ENCODE measurements at regions of chr19 and their contacts with region 1.

Region 1: GRCh38 chr19:6372594-6373095 is at the start of gene ALKBH7:
- DNase-seq: peak; percentile 98
- ATAC-seq: peak; percentile 84
- H3K4me3 Mint-ChIP-seq: peak within 1 kb of the TSS; percentile 80
- H3K27ac Mint-ChIP-seq: peak within 1 kb of the TSS; percentile 92
- H3K4me1 Mint-ChIP-seq: peaks cover 11% of the 10 kb centered on the region
- H3K27me3 Mint-ChIP-seq: no peaks in the 10 kb centered on the region
- total RNA-seq, gene ALKBH7: 22.8 to 44.7 TPM

Region 2: GRCh38 chr19:5622463-5623396 is 749.9 kb before region 1 on chr19 and contains the starts of genes SAFB and SAFB2:
- CTCF ChIA-PET with region 1: no interaction called
- POLR2A ChIA-PET with region 1: no interaction called
- intact Hi-C with region 1: loop called in 1 of 2 experiments (anchors 10 kb)
- DNase-seq: peak; percentile 100
- ATAC-seq: peak; percentile 92
- H3K4me3 Mint-ChIP-seq: peak within 1 kb of the TSS; percentile 100
- H3K27ac Mint-ChIP-seq: peak within 1 kb of the TSS; percentile 100
- H3K4me1 Mint-ChIP-seq: peaks cover 66% of the 10 kb centered on the region
- H3K27me3 Mint-ChIP-seq: no peaks in the 10 kb centered on the region
- total RNA-seq, gene SAFB: 100 to 118 TPM
- total RNA-seq, gene SAFB2: 65.0 to 78.6 TPM

Region 3: DNA sequence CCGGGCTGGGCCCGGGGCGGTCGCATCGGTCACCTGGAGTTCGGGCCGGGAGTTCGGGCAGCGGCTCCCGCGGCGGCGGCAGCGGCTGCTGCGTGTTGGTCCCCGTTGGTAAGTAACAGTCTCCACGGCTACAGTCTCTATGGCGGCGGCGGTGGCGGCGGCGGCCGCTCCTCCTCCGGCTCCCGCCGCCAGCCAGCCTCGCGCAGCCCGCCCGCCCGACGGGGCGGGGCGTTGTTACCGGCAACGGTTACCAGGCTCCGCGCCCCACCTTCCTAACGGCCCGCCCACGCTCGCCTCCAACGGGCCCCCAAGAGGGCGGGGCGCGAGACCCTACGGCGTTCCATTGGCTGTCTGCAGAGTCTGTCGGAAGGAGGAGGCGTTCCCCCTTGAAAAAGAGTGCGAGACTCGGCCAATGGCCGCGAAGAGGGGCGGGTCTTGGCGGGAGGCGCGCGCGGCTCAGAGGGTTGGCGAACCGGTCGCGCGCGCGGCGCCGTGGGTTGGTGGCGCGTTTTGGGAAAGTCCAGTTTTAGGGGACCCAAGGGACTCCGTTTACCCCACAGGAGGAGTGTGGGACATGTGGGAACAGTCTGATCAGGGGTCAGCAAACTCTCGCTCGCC is 262.2 kb before region 1 on chr19 and contains the start of gene RFX2:
- CTCF ChIA-PET with region 1: no interaction called
- POLR2A ChIA-PET with region 1: no interaction called
- intact Hi-C with region 1: loop called in 1 of 2 experiments (anchors 1 kb)
- DNase-seq: peak; percentile 100
- ATAC-seq: peak; percentile 98
- H3K4me3 Mint-ChIP-seq: peak within 1 kb of the TSS; percentile 76
- H3K27ac Mint-ChIP-seq: peak within 1 kb of the TSS; percentile 60
- H3K4me1 Mint-ChIP-seq: peaks cover 23% of the 10 kb centered on the region
- H3K27me3 Mint-ChIP-seq: peaks cover 16% of the 10 kb centered on the region
- total RNA-seq, gene RFX2: 8.6 to 8.9 TPM

Region 4: GRCh38 chr19:6161271-6161850 is 211.3 kb before region 1 on chr19:
- CTCF ChIA-PET with region 1: no interaction called
- POLR2A ChIA-PET with region 1: no interaction called
- intact Hi-C with region 1: no loop called
- DNase-seq: peak; percentile 71
- ATAC-seq: peak; percentile 85
- H3K4me3 Mint-ChIP-seq: no peak overlapping the region
- H3K27ac Mint-ChIP-seq: no peak overlapping the region
- H3K4me1 Mint-ChIP-seq: peaks cover 7% of the 10 kb centered on the region
- H3K27me3 Mint-ChIP-seq: no peaks in the 10 kb centered on the region

Region 5: GRCh38 chr19:6393074-6393983 is 20.7 kb after region 1 on chr19 and contains the start of gene GTF2F1:
- CTCF ChIA-PET with region 1: no interaction called
- POLR2A ChIA-PET with region 1: interaction called, 6 read pairs
- intact Hi-C with region 1: loop called (anchors 1 kb)
- DNase-seq: peak; percentile 96
- ATAC-seq: peak; percentile 89
- H3K4me3 Mint-ChIP-seq: peak within 1 kb of the TSS; percentile 85
- H3K27ac Mint-ChIP-seq: peak within 1 kb of the TSS; percentile 91
- H3K4me1 Mint-ChIP-seq: peaks cover 22% of the 10 kb centered on the region
- H3K27me3 Mint-ChIP-seq: no peaks in the 10 kb centered on the region
- total RNA-seq, gene GTF2F1: 60.9 to 78.5 TPM

Region 6: DNA sequence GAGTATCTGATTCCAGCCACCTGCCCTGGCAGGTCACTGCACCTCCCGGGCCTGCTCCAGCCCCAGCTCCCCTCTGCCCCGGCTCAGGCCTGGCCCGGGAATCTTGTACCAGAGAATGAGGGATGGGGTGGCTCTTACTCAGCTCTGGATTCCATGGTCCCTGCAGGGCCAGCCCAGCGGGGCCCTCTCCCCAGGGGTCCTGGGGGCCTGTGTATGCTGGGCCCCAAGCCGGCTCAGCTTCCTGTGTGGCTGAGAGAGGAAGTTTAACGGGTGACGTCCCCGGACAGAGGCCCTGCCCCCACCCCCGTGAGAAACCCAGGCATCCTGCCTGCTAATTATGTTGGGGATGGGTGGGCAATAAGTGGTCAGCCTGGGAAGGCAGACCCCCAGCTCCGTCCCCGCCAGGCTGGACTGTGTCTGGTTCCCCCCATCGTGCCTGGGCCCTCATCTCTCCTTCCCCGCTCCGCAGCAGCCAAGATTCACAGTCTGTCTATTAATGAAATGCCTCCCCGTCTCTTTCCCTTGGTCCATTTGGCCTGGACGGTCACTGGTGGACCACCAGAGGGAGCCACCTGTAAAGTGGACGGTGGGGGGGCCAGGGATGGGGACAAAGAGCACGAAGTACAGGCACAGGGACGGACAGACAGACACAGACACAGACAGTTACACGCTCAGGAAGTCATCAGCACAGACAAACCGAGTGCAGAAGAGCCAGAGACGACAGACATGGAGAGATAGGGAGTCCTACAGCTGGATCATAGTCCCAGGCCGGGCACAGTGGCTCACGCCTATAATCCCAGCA is 109.1 kb after region 1 on chr19 and contains the start of gene DENND1C:
- CTCF ChIA-PET with region 1: no interaction called
- POLR2A ChIA-PET with region 1: no interaction called
- intact Hi-C with region 1: loop called in 1 of 2 experiments (anchors 1 kb)
- DNase-seq: peak; percentile 84
- ATAC-seq: peak; percentile 79
- H3K4me3 Mint-ChIP-seq: peak within 1 kb of the TSS; percentile 88
- H3K27ac Mint-ChIP-seq: peak within 1 kb of the TSS; percentile 96
- H3K4me1 Mint-ChIP-seq: peaks cover 25% of the 10 kb centered on the region
- H3K27me3 Mint-ChIP-seq: no peaks in the 10 kb centered on the region
- total RNA-seq, gene DENND1C: 49.5 to 56.3 TPM

Region 7: GRCh38 chr19:6654347-6655310 is 282.0 kb after region 1 on chr19:
- CTCF ChIA-PET with region 1: no interaction called
- POLR2A ChIA-PET with region 1: no interaction called
- intact Hi-C with region 1: no loop called
- DNase-seq: peak; percentile 80
- ATAC-seq: peak; percentile 80
- H3K4me3 Mint-ChIP-seq: peak overlapping the region; percentile 71
- H3K27ac Mint-ChIP-seq: peak overlapping the region; percentile 96
- H3K4me1 Mint-ChIP-seq: peaks cover 61% of the 10 kb centered on the region
- H3K27me3 Mint-ChIP-seq: no peaks in the 10 kb centered on the region

Region 8: GRCh38 chr19:6862673-6863078 is 490.0 kb after region 1 on chr19:
- CTCF ChIA-PET with region 1: no interaction called
- POLR2A ChIA-PET with region 1: interaction called, 12 read pairs
- intact Hi-C with region 1: no loop called
- DNase-seq: peak; percentile 96
- ATAC-seq: peak; percentile 83
- H3K4me3 Mint-ChIP-seq: peak overlapping the region; percentile 72
- H3K27ac Mint-ChIP-seq: peak overlapping the region; percentile 89
- H3K4me1 Mint-ChIP-seq: peaks cover 14% of the 10 kb centered on the region
- H3K27me3 Mint-ChIP-seq: no peaks in the 10 kb centered on the region

Measured in activated CD4-positive, alpha-beta T cell treated with anti-CD3 and anti-CD28 coated beads for 36 hours (primary cell).